ENCODE measurements at regions of chr1 and their contacts with region 1.

Region 1: DNA sequence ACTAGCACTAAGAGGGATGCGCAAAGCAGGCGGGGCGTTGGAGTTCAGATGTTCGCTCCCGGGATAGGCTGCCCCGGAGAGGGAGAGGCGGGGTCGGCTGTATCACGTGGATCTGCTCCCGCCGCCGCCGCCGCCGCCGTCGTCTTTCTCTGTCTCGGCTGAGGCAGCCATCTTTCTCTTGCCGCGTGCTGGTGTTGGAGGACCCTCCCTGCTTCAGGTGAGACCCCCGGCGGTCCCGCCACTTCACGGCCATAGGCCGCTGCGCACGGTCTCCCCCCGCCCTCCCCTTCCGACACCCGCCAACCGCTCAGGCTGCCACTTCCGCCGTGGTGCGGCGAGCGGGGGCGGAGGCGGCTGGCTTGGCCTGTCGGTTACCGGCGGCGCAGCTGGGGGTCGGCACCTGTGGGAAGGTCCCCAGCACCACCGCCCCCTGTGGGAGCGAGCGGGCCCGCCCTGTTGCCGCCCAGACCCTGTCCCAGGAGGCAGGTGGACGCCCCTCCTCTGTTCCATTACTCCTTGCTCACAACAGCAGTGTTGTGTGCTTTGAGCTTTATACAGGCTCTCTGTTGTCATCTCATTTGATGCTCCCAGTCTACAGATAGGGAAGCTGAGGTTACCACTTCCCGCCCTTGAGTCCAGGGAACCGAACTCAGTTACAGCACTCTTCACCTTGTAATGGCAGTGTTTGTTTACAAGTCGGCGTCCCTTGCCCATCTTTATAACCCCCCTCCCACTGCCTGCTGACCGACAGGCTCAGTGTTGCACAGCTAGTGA is at the start of gene BTF3L4:
- DNase-seq: peak; percentile 85 to 95 (median 92)
- ATAC-seq: peak; percentile 92
- H3K4me3 ChIP-seq: peak within 1 kb of the TSS; percentile 79 to 96
- H3K4me3 Mint-ChIP-seq: peak within 1 kb of the TSS; percentile 98
- H3K27ac ChIP-seq: peak within 1 kb of the TSS; percentile 74 to 85
- H3K27ac Mint-ChIP-seq: peak within 1 kb of the TSS; percentile 93
- H3K4me1 ChIP-seq: peaks cover 33% of the 10 kb centered on the region
- H3K4me1 Mint-ChIP-seq: peaks cover 70% of the 10 kb centered on the region
- H3K27me3 ChIP-seq: no peaks in the 10 kb centered on the region
- H3K27me3 Mint-ChIP-seq: no peaks in the 10 kb centered on the region
- CTCF ChIP-seq: no peak
- total RNA-seq, gene BTF3L4: 38.4 to 39.7 TPM

Region 2: GRCh38 chr1:51616901-51617708 is 439.2 kb before region 1 on chr1 and contains the start of gene OSBPL9:
- CTCF ChIA-PET with region 1: no interaction called
- POLR2A ChIA-PET with region 1: no interaction called
- intact Hi-C with region 1: loop called in 1 of 2 experiments (anchors 5 kb)
- DNase-seq: peak; percentile 78 to 94 (median 87)
- ATAC-seq: peak; percentile 93
- H3K4me3 ChIP-seq: peak within 1 kb of the TSS; percentile 90 to 98
- H3K4me3 Mint-ChIP-seq: peak within 1 kb of the TSS; percentile 100
- H3K27ac ChIP-seq: peak within 1 kb of the TSS; percentile 84
- H3K27ac Mint-ChIP-seq: peak within 1 kb of the TSS; percentile 99
- H3K4me1 ChIP-seq: peaks cover 23% of the 10 kb centered on the region
- H3K4me1 Mint-ChIP-seq: peaks cover 42% of the 10 kb centered on the region
- H3K27me3 ChIP-seq: no peaks in the 10 kb centered on the region
- H3K27me3 Mint-ChIP-seq: peaks cover under 1% of the 10 kb centered on the region
- CTCF ChIP-seq: no peak
- total RNA-seq, gene OSBPL9: 48.5 to 49.2 TPM

Region 3: GRCh38 chr1:52141513-52142219 is 85.3 kb after region 1 on chr1 and contains the start of gene ZFYVE9:
- CTCF ChIA-PET with region 1: interaction called, 4 read pairs
- POLR2A ChIA-PET with region 1: no interaction called
- intact Hi-C with region 1: loop called in 1 of 2 experiments (anchors 2 kb)
- DNase-seq: peak; percentile 41 to 87 (median 71)
- ATAC-seq: peak; percentile 78
- H3K4me3 ChIP-seq: peak within 1 kb of the TSS; percentile 52 to 66
- H3K4me3 Mint-ChIP-seq: peak within 1 kb of the TSS; percentile 92
- H3K27ac ChIP-seq: peak within 1 kb of the TSS; percentile 33 to 49
- H3K27ac Mint-ChIP-seq: peak within 1 kb of the TSS; percentile 91
- H3K4me1 ChIP-seq: peaks cover 21% of the 10 kb centered on the region
- H3K4me1 Mint-ChIP-seq: peaks cover 41% of the 10 kb centered on the region
- H3K27me3 ChIP-seq: peaks cover 0 to 3% of the 10 kb centered on the region in 2 experiments
- H3K27me3 Mint-ChIP-seq: no peaks in the 10 kb centered on the region
- CTCF ChIP-seq: peak; percentile 59
- total RNA-seq, gene ZFYVE9: 5.9 to 6.3 TPM

Region 4: GRCh38 chr1:52636721-52637695 is 580.7 kb after region 1 on chr1:
- CTCF ChIA-PET with region 1: no interaction called
- POLR2A ChIA-PET with region 1: no interaction called
- intact Hi-C with region 1: loop called in 1 of 2 experiments (anchors 10 kb)
- DNase-seq: peak; percentile 44 to 91 (median 78)
- ATAC-seq: peak; percentile 60
- H3K4me3 ChIP-seq: peak overlapping the region; percentile 27 to 31
- H3K4me3 Mint-ChIP-seq: peak overlapping the region; percentile 77
- H3K27ac ChIP-seq: peak overlapping the region; percentile 89 to 99
- H3K27ac Mint-ChIP-seq: peak overlapping the region; percentile 99
- H3K4me1 ChIP-seq: peaks cover 83% of the 10 kb centered on the region
- H3K4me1 Mint-ChIP-seq: peaks cover 80% of the 10 kb centered on the region
- H3K27me3 ChIP-seq: no peaks in the 10 kb centered on the region
- H3K27me3 Mint-ChIP-seq: no peaks in the 10 kb centered on the region
- CTCF ChIP-seq: no peak

Region 5: GRCh38 chr1:53220171-53220961 is 1164.0 kb after region 1 on chr1 and contains the start of gene CZIB:
- CTCF ChIA-PET with region 1: no interaction called
- POLR2A ChIA-PET with region 1: no interaction called
- intact Hi-C with region 1: loop called in 1 of 2 experiments (anchors 5 kb)
- DNase-seq: peak; percentile 83 to 95 (median 92)
- ATAC-seq: peak; percentile 92
- H3K4me3 ChIP-seq: peak within 1 kb of the TSS; percentile 80 to 92
- H3K4me3 Mint-ChIP-seq: peak within 1 kb of the TSS; percentile 94
- H3K27ac ChIP-seq: peak within 1 kb of the TSS; percentile 94
- H3K27ac Mint-ChIP-seq: peak within 1 kb of the TSS; percentile 98
- H3K4me1 ChIP-seq: peaks cover 16% of the 10 kb centered on the region
- H3K4me1 Mint-ChIP-seq: peaks cover 18% of the 10 kb centered on the region
- H3K27me3 ChIP-seq: no peaks in the 10 kb centered on the region
- H3K27me3 Mint-ChIP-seq: no peaks in the 10 kb centered on the region
- CTCF ChIP-seq: no peak
- total RNA-seq, gene CZIB: 26.7 to 27.4 TPM

Region 6: GRCh38 chr1:54052934-54053744 is 1996.8 kb after region 1 on chr1 and contains the starts of genes TCEANC2 and TMEM59:
- CTCF ChIA-PET with region 1: no interaction called
- POLR2A ChIA-PET with region 1: no interaction called
- intact Hi-C with region 1: loop called in 1 of 2 experiments (anchors 5 kb)
- DNase-seq: peak; percentile 94 to 100 (median 97)
- ATAC-seq: peak; percentile 89
- H3K4me3 ChIP-seq: peak within 1 kb of the TSS; percentile 87 to 89
- H3K4me3 Mint-ChIP-seq: no peak within 1 kb of the TSS
- H3K27ac ChIP-seq: peak within 1 kb of the TSS; percentile 89 to 93
- H3K27ac Mint-ChIP-seq: no peak within 1 kb of the TSS
- H3K4me1 ChIP-seq: peaks cover 39% of the 10 kb centered on the region
- H3K4me1 Mint-ChIP-seq: peaks cover 51% of the 10 kb centered on the region
- H3K27me3 ChIP-seq: no peaks in the 10 kb centered on the region
- H3K27me3 Mint-ChIP-seq: no peaks in the 10 kb centered on the region
- CTCF ChIP-seq: no peak
- total RNA-seq, gene TCEANC2: 1.8 to 2.1 TPM
- total RNA-seq, gene TMEM59: 125 to 142 TPM